ENCODE measurements at regions of chr4 and their contacts with region 1.

Region 1: DNA sequence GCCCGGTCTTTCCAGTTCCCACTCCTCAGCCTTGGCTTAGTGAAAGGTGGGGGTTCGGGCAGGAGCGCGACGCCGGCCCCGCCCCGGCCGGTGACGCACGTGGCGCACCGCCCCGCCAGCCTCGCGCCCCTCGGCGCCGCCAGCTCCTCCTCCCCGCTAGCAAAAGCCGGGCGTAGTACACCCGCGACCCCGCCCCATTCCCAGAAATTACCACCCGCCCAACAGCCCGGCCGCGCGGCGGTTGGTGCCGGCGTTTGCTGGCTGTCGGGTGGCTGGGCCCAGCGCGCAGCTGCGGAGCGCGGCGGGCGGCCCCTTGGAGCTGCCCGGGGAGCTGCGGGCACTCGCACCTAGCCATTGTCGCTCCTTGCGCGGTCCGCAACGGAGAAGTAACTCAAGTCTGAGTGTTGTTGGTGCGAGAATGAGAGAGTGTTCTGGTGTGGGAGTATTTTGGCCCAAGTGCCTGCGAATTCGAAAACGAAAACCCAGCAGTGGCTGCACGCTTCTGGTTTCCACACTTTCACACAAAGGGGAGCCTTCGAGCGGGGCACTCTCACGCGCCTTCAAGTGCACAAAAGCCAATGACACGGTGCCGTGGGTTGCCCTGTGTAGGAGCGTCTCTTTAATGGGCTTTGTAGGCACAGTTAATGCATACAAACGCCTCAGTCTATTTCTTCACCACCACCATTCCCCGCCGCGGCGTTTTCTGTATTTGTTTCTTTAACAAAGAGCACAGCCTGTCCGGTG is 1.0 kb upstream of the ELF2 start:
- DNase-seq: peak; percentile 99

Region 2: GRCh38 chr4:138716559-138717335 is 461.3 kb before region 1 on chr4:
- intact Hi-C with region 1: no loop called
- DNase-seq: no peak

Region 3: GRCh38 chr4:139015269-139015947 is 162.6 kb before region 1 on chr4 and contains the start of gene NOCT:
- intact Hi-C with region 1: loop called (anchors 5 kb)
- DNase-seq: peak; percentile 97
- total RNA-seq, gene NOCT: 7.3 TPM

Region 4: GRCh38 chr4:139083956-139084803 is 93.9 kb before region 1 on chr4:
- intact Hi-C with region 1: loop called (anchors 2 kb)
- DNase-seq: peak; percentile 93

Region 5: GRCh38 chr4:139099366-139099982 is 78.6 kb before region 1 on chr4:
- intact Hi-C with region 1: loop called (anchors 5 kb)
- DNase-seq: no peak

Region 6: DNA sequence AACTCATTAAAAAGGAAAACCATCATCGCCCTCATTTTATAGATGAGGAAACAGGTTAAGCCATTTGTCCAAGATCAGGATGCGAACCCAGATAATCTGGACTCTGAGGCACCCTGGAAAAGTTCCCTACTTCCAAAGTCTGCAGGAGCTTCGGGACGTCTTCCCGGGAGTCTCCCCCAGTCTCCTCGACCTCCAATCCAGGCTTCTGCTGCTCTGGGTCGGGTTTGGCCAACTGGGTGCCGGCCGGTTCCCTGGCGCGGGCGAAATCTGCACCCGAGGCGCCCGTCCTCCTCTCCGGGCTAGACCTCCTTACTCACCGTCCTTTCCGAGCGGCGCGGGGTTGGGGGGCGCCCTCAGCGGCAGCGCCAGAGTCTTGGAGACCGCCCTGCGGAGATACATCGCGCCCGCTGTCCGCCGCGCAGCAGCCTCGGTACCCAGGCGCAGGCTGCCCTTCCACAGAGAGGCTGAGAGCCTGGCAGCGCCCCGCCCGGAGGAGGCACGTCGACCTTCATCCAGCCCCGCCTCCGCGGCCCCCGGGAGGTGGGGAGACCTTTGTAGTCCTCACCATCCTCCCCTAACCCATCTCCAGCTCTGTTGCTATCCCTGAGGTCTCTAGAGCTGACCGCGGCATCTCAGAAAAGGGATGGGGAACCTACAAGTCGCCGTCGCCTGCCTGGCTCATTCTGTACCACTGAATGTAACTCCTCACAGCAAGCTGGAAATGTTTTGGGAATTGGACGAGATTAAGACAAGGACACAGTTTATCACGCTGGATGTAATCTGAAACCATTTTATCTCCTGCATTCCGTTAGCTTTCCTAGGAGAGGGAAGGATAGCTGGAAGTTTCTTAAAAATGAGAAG is 102.0 kb after region 1 on chr4 and contains the start of gene MGARP:
- intact Hi-C with region 1: no loop called
- DNase-seq: peak; percentile 77
- total RNA-seq, gene MGARP: 0.81 TPM

Region 7: GRCh38 chr4:139301113-139301820 is 123.2 kb after region 1 on chr4 and contains the start of gene NAA15:
- intact Hi-C with region 1: loop called (anchors 2 kb)
- DNase-seq: peak; percentile 99
- total RNA-seq, gene NAA15: 37.9 TPM

Region 8: DNA sequence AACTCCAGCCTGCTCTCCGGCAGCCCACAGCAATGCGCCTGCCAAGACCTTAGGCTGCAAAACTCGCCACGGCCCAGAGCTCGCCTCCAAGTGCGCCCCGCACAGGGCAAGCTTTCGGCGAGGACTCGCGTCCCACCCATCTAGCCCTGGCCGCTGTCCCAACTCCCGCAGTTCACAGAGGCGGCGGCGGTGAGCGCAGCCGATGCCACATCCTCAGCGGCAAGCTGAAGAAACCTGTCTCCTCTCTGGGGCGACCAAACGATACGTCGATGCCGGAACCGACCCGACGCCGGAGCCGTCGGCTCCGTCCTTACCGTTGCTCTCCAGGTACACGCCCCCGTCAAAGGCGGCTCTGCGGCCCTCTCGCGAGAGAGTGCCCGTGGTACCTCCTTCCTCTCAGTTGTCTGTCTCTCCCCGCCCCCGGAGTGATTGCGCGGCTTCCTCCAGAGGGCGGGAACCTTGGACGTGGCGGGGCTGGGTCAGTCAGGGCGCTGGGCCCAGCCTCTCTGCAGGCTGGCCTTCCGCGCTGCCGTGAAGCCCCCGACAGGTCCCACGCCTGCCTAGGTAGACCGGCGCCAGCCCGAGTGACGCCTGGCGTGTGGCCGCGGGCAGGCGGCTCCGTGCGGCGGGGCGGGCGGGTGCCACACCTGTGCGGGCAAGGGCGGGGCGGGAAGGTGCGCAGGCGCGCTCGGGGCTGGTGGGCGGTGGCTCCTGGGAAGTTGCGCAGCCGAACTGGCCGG is 275.5 kb after region 1 on chr4:
- intact Hi-C with region 1: loop called (anchors 5 kb)
- DNase-seq: peak; percentile 99

Region 9: DNA sequence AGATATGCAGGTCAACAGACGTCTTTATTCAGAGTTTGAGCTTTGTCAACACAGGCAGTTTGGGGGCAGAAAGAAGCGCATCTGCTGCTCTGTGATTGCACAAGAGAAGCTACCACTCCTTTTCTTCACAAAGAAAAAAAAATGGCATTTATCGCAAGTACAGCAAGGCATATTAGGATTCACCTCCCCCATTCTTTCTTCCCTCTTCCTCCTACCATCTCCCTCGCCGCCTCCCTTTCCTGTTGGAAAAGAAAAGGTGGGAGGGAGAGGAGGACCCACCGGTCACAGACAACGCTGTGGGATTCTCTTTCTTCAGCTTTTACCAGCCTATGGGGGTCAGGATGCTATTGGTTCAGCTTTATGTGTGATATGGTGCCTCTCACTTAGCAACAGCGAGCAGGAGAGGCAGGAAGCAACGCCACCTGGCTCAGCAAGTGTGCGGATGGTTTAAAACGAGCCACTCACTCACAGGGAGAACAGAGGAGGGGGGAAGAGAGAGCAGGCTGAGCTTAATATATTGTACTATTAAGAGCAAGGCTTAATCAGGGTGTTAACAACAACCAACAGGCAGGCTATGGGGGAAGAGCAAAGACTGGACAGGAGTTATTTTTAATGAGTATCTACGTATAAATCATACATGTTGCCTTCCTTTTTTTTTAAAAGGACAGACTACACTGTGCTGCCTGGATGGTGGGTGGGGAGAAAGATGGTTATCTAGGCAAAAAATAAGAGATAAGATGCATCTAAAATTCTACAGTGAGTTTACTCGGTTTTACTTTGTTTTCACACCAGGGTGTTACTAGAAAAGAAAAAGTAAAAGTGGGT is 871.2 kb after region 1 on chr4:
- intact Hi-C with region 1: no loop called
- DNase-seq: peak; percentile 79